GM12878 (cell line): ENCODE measurements at regions of chr7 and their contacts with region 1.

Region 1: DNA sequence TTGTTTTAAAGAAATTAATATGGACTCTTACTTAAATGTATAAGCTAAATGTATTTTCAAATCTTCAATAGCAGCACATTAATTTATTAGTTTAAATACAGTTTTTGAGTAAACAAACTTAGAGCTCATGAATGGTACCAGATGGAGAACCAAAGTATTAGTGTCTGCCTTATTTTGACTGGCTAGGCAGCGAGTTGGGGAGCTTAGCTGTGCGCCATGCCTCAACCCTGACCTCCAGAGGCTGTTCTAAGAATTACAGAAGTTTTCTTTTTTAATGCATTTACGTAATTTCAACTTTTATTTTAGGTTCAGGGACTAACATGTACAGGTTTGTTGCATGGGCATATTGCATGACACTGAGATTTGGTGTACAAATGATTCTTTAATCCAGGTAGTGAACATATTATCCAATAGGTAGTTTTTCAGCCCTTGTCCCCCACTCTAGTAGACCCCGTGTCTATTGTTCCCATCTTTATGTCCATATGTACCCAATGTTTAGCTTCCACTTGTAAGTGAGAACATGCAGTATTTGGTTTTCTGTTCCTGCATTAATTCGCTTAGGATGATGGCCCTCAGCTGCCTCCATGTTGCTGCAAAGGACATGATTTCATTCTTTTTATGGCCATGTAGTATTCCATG is 166.8 kb downstream of the IQUB start:
- DNase-seq: peak; percentile 15
- ATAC-seq: peak; percentile 88
- H3K4me3 ChIP-seq: no peak overlapping the region
- H3K27ac ChIP-seq: no peak overlapping the region
- H3K4me1 ChIP-seq: no peaks in the 10 kb centered on the region
- H3K27me3 ChIP-seq: no peaks in the 10 kb centered on the region
- CTCF ChIP-seq: peak; percentile 74 to 84 (median 77)
- EP300 ChIP-seq: no peak
- POLR2A ChIP-seq: no peak
- RAD21 ChIP-seq: peak; percentile 81

Region 2: GRCh38 chr7:122550545-122550944 is 817.1 kb before region 1 on chr7:
- CTCF ChIA-PET with region 1: interaction called, 3 read pairs
- POLR2A ChIA-PET with region 1: no interaction called
- RAD21 ChIA-PET with region 1: interaction called, 10 read pairs
- SMC1A ChIA-PET with region 1: interaction called, 5 read pairs
- in situ Hi-C with region 1: no loop called
- intact Hi-C with region 1: no loop called
- DNase-seq: no peak
- ATAC-seq: peak; percentile 68
- H3K4me3 ChIP-seq: no peak overlapping the region
- H3K27ac ChIP-seq: no peak overlapping the region
- H3K4me1 ChIP-seq: no peaks in the 10 kb centered on the region
- H3K27me3 ChIP-seq: no peaks in the 10 kb centered on the region; a peak in 1 of 4 replicates
- CTCF ChIP-seq: peak in 2 of 3 experiments; percentile 23 to 60; a peak in 2 of 6 replicates
- EP300 ChIP-seq: no peak
- POLR2A ChIP-seq: no peak
- RAD21 ChIP-seq: no peak

Region 3: GRCh38 chr7:122803323-122803722 is 564.3 kb before region 1 on chr7:
- CTCF ChIA-PET with region 1: interaction called, 12 read pairs
- POLR2A ChIA-PET with region 1: no interaction called
- RAD21 ChIA-PET with region 1: interaction called, 7 read pairs
- SMC1A ChIA-PET with region 1: interaction called, 4 read pairs
- in situ Hi-C with region 1: no loop called
- intact Hi-C with region 1: no loop called
- DNase-seq: no peak
- ATAC-seq: peak; percentile 83
- H3K4me3 ChIP-seq: no peak overlapping the region
- H3K27ac ChIP-seq: no peak overlapping the region
- H3K4me1 ChIP-seq: no peaks in the 10 kb centered on the region
- H3K27me3 ChIP-seq: no peaks in the 10 kb centered on the region
- CTCF ChIP-seq: peak in 2 of 3 experiments; percentile 34 to 52; a peak in 3 of 6 replicates
- EP300 ChIP-seq: no peak
- POLR2A ChIP-seq: no peak
- RAD21 ChIP-seq: peak; percentile 22; the same call in 1 of the 2 replicates

Region 4: DNA sequence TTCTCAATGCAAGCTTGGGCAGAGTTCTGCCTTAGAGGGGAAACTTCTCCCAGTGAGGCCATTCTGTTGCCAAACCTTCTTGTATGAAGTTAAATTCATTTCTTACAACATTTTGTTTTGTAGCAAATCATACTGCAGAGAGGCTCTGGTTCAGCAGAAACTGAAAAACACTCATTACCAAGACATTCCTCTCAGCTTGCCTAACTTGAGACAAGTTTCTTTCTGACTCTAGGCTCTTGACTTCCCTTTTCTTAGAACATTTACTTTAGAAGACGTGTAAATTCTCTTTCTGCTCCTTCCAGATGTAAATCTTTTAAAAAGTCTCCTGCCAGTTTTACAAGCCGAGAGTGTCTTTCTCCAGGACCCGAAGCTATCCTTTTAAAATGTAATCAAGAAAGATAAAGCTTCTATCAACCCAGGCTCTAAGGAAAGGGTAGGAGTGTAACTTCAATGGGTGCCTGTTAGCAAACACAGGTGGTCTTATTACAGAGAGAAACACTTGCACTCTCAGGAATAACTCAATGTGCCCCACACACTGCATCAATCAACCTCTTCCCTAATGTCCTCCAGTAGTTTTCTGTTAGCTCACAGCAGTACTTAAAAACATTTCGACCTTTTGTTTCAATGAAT is 291.6 kb before region 1 on chr7:
- CTCF ChIA-PET with region 1: interaction called, 40 read pairs
- POLR2A ChIA-PET with region 1: no interaction called
- RAD21 ChIA-PET with region 1: interaction called, 17 read pairs
- SMC1A ChIA-PET with region 1: interaction called, 30 read pairs
- in situ Hi-C with region 1: no loop called
- intact Hi-C with region 1: no loop called
- DNase-seq: no peak
- ATAC-seq: peak; percentile 84
- H3K4me3 ChIP-seq: no peak overlapping the region
- H3K27ac ChIP-seq: no peak overlapping the region
- H3K4me1 ChIP-seq: no peaks in the 10 kb centered on the region
- H3K27me3 ChIP-seq: no peaks in the 10 kb centered on the region
- CTCF ChIP-seq: no peak
- EP300 ChIP-seq: no peak
- POLR2A ChIP-seq: no peak
- RAD21 ChIP-seq: no peak

Region 5: DNA sequence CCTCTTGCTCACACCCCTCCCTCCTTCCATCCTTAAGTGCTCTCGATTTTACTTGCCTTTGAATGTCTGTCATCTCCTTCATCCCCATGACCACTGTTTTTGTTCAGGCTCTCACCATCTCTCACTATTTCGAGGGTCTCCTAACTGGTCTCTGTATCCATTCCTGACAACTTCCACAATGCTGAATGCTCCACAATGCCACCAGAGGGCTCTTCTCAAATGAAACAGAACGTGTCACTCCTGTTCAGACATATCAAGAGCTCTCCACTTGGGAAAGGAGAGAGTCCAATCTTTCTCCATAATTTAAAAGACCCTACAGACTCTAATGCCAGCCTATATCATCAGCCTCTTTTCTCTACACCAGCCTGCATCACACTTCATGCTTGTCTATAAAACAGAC is 158.8 kb before region 1 on chr7:
- CTCF ChIA-PET with region 1: interaction called, 42 read pairs
- POLR2A ChIA-PET with region 1: interaction called, 3 read pairs
- RAD21 ChIA-PET with region 1: interaction called, 17 read pairs
- SMC1A ChIA-PET with region 1: interaction called, 13 read pairs
- in situ Hi-C with region 1: no loop called
- intact Hi-C with region 1: loop called (anchors 2 kb)
- DNase-seq: no peak
- ATAC-seq: peak; percentile 43; the same call in 1 of the 3 replicates
- H3K4me3 ChIP-seq: no peak overlapping the region
- H3K27ac ChIP-seq: no peak overlapping the region
- H3K4me1 ChIP-seq: no peaks in the 10 kb centered on the region
- H3K27me3 ChIP-seq: no peaks in the 10 kb centered on the region
- CTCF ChIP-seq: peak; percentile 12 to 44 (median 23); a peak in 4 of 6 replicates
- EP300 ChIP-seq: no peak
- POLR2A ChIP-seq: no peak
- RAD21 ChIP-seq: peak; percentile 25; the same call in 1 of the 2 replicates

Region 6: GRCh38 chr7:123499211-123499970 is 131.8 kb after region 1 on chr7:
- CTCF ChIA-PET with region 1: no interaction called
- POLR2A ChIA-PET with region 1: no interaction called
- RAD21 ChIA-PET with region 1: no interaction called
- SMC1A ChIA-PET with region 1: no interaction called
- in situ Hi-C with region 1: no loop called
- intact Hi-C with region 1: no loop called
- DNase-seq: no peak
- ATAC-seq: no peak
- H3K4me3 ChIP-seq: no peak overlapping the region
- H3K27ac ChIP-seq: no peak overlapping the region
- H3K4me1 ChIP-seq: no peaks in the 10 kb centered on the region
- H3K27me3 ChIP-seq: no peaks in the 10 kb centered on the region
- CTCF ChIP-seq: no peak
- EP300 ChIP-seq: no peak
- POLR2A ChIP-seq: no peak
- RAD21 ChIP-seq: no peak